Activated CD4-positive, alpha-beta T cell treated with anti-CD3 and anti-CD28 coated beads, Interleukin-2, amount 10 ng/mL, durations not matched to agents 7 days and 5 days (primary cell): ENCODE measurements at regions of chr12 and their contacts with region 1.

Region 1: GRCh38 chr12:100114574-100114973 is 28.1 kb downstream of the BLTP3B start:
- DNase-seq: no peak
- H3K4me3 Mint-ChIP-seq: no peak overlapping the region
- H3K27ac Mint-ChIP-seq: no peak overlapping the region
- H3K4me1 Mint-ChIP-seq: peaks cover 3% of the 10 kb centered on the region
- H3K27me3 Mint-ChIP-seq: no peaks in the 10 kb centered on the region

Region 2: GRCh38 chr12:100083308-100083707 is 31.3 kb before region 1 on chr12:
- CTCF ChIA-PET with region 1: no interaction called
- POLR2A ChIA-PET with region 1: no interaction called
- DNase-seq: no peak
- H3K4me3 Mint-ChIP-seq: no peak overlapping the region
- H3K27ac Mint-ChIP-seq: no peak overlapping the region
- H3K4me1 Mint-ChIP-seq: no peaks in the 10 kb centered on the region
- H3K27me3 Mint-ChIP-seq: no peaks in the 10 kb centered on the region

Region 3: DNA sequence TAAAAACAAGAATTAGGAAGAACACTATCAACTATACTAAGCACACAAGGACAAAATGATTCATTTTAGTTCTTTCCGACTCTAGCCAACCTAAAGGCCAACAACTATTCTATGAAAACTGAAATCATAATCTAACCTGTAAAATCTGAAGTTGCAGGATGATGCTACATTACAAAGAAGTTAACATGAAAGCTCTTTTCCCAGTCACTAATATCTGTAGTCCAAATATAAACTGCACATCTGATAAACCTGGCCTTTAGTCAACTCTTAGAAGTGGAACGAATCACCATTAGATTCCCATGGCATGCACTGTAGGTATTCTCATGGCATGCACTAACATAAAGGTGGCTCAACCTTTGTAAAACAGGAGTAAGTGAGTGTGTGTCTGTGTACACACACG is 13.6 kb before region 1 on chr12:
- CTCF ChIA-PET with region 1: no interaction called
- POLR2A ChIA-PET with region 1: interaction called, 10 read pairs
- DNase-seq: no peak
- H3K4me3 Mint-ChIP-seq: no peak overlapping the region
- H3K27ac Mint-ChIP-seq: no peak overlapping the region
- H3K4me1 Mint-ChIP-seq: no peaks in the 10 kb centered on the region
- H3K27me3 Mint-ChIP-seq: no peaks in the 10 kb centered on the region